ENCODE measurements at regions of chr10 and their contacts with region 1.

Region 1: GRCh38 chr10:89389254-89389653 is 3.2 kb upstream of the IFIT1 start:
- DNase-seq: peak; percentile 32
- CTCF ChIP-seq: no peak

Region 2: GRCh38 chr10:88538038-88538437 is 851.2 kb before region 1 on chr10:
- in situ Hi-C with region 1: no loop called
- DNase-seq: no peak
- CTCF ChIP-seq: no peak

Region 3: DNA sequence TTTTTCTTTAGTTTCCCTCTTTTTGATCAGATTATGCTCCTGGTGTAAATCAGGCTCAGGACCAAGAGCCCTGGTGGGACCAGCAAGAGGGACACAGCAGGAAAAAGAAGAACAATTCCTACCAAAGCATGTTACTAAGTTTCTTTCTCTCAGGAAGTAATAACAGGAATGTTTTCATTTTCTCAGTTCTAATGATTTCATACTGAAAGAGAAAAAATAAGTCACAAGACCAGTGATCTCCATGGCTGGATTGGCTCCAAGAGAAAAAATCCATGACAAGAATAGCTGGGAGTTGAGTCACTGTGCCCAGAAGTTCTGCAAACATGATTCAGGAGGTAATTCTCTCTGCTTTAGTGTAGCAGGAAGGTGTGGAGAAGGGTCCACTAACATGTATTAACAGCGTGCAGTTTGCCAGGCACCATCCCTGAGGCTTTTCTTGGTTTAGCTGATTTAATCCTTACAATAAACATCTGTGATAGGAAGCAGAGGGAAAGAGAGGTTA is 111.2 kb before region 1 on chr10:
- in situ Hi-C with region 1: loop called (anchors 10 kb)
- DNase-seq: no peak
- CTCF ChIP-seq: no peak

Region 4: DNA sequence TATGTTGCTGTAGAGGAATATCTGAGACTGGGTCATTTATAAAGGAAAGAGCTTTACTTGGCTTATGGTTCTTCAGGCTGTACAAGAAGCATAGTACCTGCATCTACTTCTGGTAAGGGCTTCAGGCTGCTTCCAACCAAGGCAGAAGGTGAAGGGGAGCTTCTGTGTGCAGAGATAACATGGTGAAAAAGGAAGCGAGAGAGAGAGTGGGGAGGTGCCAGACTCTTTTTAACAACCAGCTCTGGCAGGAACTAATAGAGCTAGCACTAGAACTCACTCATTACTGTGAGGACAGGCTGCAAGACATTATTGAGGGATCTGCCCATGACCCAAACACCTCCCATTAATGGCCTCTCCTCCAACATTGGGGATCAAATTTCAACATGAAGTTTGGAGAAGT is 406.6 kb after region 1 on chr10:
- in situ Hi-C with region 1: no loop called
- DNase-seq: no peak
- CTCF ChIP-seq: no peak